BJ (cell line): ENCODE measurements at regions of chr15 and their contacts with region 1.

Region 1: DNA sequence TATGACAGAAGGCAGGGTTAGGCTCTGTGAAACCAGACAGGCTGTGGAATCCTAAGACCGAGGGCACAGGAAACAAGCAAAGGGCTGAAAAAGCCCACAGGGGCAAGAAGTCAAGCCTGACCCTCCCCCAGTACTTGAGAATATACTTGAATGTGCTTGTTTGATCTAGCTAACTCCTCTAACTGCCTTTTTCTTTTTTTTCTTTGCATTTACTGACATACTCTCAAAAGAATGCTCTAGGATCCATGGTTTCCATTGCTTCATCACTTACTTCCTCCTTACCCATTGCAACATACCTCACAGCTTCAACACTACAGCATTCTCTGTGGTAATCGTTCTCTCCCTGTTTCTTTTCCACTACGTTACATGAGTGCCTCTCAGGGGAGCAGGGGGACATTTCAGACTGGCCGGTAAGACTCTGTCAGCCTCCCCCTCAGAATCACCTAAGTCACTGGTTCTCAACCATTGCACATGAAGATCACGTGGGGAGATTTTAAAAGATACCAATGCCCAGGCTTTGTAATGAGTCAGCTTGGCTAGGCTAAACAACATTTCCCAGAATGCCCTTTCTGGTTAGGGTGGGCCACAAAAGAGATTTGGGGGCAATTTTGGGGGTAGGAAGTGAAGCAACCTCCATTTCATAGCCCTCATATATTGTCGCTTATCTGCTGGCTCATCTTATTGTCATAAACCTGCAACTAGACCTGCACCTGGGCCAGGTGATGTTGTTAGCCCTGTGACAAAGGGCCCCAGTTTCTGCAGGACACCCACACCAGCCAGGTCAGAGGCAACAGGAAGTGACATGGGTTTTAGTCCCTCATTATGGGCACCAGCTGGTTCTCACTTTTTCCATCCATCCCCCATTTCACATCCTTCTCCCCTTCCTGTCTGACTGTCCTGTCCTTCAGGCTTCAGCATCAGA is 24.6 kb upstream of the RSL24D1 start:
- DNase-seq: peak; percentile 77
- H3K4me3 ChIP-seq: no peak overlapping the region
- H3K27me3 ChIP-seq: no peaks in the 10 kb centered on the region
- CTCF ChIP-seq: no peak

Region 2: DNA sequence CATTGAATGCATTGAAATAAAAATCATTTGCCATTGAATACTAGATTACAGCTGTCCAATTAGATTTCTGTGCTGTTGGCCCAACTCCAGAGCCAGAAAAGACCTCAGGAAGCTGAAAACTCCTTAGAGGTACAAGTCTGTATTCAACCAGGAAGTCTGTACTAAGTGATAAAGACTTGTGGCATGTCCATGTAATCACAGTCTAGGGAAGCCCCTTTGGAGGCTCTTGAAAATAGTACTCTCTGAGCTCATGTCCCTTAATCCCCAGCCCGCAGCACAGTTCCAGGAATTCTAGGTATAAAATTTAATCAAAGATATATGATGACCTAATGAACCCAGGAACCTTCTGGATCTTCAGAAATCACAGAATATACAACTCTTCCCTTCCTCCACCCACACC is 304.0 kb before region 1 on chr15:
- CTCF ChIA-PET with region 1: no interaction called
- POLR2A ChIA-PET with region 1: no interaction called
- DNase-seq: no peak
- H3K4me3 ChIP-seq: no peak overlapping the region
- H3K27me3 ChIP-seq: no peaks in the 10 kb centered on the region
- CTCF ChIP-seq: no peak

Region 3: DNA sequence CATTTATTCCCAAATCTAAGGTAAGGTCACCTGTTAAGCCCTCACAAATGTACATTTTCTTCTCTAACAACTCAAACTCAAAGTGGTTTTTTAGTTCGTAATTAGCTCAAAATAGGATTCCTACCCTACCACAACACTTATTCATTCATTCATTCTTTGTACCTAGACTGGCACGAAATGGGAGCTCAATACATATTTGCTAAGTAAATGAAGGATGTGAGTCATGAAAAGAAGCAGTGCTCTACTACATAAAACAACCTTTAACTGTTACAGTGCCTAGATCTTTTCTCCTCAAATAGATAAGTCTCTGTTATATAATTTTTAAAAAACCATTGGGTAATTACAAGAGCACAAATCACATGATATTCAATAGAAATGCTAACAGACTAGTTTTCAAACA is 37.7 kb before region 1 on chr15:
- CTCF ChIA-PET with region 1: no interaction called
- POLR2A ChIA-PET with region 1: no interaction called
- DNase-seq: no peak
- H3K4me3 ChIP-seq: no peak overlapping the region
- H3K27me3 ChIP-seq: no peaks in the 10 kb centered on the region
- CTCF ChIP-seq: no peak

Region 4: DNA sequence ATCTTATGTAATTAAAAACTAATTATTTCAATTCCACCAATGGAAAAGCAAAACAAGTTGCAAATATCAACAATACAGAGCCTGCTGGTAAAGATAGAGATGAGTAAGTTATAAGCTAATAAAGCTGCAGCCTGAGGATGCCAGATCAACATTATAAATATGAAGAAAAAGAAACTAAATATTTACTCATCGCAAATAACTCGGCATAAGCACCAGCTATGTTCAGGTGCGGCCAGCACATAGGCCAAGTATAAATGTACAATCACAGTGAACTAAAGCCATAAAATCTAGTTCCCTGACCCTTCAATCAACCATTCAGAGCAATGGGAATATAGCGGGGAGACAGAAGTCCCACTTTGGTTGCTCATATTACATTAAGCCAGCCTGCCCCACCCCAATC is 16.9 kb before region 1 on chr15:
- CTCF ChIA-PET with region 1: interaction called, 10 read pairs
- POLR2A ChIA-PET with region 1: no interaction called
- DNase-seq: no peak
- H3K4me3 ChIP-seq: no peak overlapping the region
- H3K27me3 ChIP-seq: no peaks in the 10 kb centered on the region
- CTCF ChIP-seq: no peak

Region 5: DNA sequence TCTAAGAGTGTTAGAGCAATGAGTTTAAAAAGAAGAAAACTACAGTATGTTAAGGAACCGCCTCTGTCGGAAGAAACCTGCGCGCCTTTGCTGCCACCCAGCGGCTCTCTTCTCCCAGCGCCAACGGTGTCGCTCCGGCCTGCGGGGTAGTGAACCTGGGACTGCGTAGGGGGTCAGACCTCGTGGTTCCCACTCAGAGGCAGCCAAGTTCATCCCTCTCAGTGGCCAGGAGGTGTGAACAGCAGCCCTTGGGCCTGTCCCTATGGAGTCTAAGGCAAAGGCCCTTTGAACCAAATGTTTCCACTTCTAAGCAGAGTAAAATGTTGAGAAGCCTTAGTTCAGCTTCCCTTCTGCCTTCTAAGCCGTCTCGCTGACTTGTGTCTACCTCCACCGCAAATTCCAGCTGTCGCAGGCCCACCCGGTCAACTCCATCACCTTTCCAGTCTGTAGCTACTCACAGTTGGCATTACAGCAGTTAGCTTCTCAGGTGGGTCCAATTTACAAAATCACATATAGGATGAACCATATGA is 69.2 kb after region 1 on chr15:
- CTCF ChIA-PET with region 1: interaction called, 61 read pairs
- POLR2A ChIA-PET with region 1: no interaction called
- DNase-seq: peak; percentile 30
- H3K4me3 ChIP-seq: peak overlapping the region; percentile 89
- H3K27me3 ChIP-seq: no peaks in the 10 kb centered on the region
- CTCF ChIP-seq: peak; percentile 89

Region 6: DNA sequence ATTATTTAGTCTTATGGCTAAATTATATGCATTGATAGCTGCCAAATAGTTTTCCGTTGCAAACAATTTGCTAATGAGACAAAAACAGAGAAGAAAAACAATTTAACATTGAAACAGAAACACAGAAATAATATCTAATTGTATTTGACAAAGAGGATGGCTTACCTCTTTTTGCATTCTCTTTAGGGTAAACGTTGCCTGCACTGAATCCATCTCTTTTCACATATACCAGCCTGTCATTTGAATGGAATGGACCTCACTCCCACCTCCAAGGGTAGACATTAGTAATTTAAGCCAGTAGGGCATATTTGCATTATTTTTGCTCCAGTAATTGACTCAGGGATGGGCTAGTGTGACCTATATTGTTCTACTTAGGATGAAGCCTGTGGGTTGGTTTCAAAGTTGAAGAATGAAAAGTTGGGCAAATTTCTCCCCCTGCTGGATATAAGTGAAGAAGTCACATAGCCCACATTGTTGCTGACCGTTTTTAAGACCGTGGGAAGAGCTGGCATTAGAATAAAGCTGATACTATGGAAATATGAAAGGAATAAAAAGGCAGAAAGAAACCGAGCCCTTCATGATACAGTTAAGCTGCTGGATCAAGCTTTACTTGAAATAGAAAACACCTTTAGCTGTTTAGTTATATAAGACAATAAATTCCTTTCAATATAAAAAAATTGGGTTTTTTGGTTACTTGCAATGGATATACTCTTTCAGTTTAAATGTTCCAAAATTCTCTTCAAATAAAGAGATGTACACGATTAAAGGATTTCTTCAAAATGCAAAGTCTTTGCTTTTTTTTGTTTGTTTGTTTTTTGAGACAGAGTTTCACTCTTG is 213.9 kb after region 1 on chr15:
- CTCF ChIA-PET with region 1: interaction called, 11 read pairs
- POLR2A ChIA-PET with region 1: no interaction called
- DNase-seq: no peak
- H3K4me3 ChIP-seq: no peak overlapping the region
- H3K27me3 ChIP-seq: no peaks in the 10 kb centered on the region
- CTCF ChIP-seq: peak; percentile 68